Colonic mucosa (tissue), 4 donors: ENCODE measurements at regions of chr19 and their contacts with region 1.

Region 1: DNA sequence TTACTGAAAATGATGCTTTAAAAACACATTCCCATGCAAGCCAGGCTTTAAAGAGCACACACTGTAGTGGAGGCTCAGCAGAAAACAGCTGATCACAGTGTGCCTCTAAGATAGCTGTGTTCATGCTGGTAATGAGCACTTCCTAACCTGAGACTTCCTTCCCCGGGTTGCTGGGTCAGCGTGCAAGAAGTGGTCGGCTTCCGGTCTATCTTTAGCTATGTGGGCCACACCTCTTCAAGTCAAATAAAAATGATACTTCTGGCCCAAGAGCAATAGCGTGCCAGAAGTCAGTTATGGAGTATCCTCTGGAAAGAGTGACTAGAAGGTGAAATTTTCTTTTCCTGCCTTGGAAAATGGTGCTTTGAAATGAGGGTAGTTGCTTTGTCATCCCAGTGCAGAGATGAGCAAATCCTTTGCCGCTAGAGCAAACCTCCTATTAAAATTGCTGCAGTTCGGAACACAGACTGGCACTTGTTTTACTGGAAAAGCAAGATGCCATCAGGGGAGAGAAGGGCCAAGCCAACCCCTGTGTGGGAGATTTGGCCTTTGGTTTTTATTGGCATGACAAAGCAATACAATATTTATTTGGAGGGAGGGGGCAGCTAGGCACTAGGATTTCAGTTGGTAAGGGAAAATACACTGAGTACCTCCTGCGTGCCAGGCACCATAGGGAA is 64.2 kb downstream of the ARHGAP35 start:
- DNase-seq: peak; percentile 50
- H3K4me3 ChIP-seq: no peak overlapping the region
- H3K27ac ChIP-seq: peak overlapping the region; percentile 74
- H3K4me1 ChIP-seq: peaks cover 22% of the 10 kb centered on the region
- H3K27me3 ChIP-seq: no peaks in the 10 kb centered on the region
- CTCF ChIP-seq: no peak

Region 2: DNA sequence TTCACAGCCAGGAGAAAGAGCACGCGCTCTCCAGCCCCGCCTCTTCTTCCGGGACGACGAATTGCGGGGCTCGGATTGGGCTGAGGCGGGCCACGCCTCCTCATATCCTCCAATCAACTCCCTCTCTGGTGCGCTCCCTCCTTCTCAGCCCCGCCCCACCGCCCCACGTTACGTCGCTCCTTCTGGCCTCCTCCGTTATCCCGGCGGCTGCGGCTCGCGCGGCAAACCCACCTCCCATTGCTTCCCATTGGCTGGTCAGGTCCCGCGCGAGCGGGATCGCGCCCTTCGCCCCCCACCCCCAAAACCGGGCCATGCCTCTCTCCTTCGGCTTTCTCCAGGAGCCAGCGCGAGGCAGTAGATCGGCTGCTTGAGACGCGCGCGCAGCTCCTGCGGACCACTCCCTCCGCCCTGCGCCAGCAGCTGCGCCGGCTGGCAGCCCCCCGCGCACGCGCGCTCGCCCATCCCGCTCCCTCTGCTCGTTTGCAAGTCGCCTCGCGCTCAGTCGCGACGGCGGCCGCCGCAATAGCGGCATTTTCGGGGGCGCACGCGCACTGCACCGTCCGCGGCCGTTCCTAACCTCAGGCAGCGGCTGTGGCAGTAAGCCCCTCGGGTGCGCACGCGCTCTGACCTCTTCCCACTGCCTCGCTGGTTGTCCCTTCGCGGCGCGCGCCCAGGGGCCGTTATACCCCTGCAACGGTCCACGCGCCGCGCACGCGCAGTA is 64.7 kb before region 1 on chr19:
- intact Hi-C with region 1: loop called (anchors 10 kb)
- DNase-seq: peak; percentile 98
- H3K4me3 ChIP-seq: peak overlapping the region; percentile 90
- H3K27ac ChIP-seq: peak overlapping the region; percentile 96
- H3K4me1 ChIP-seq: peaks cover 12% of the 10 kb centered on the region
- H3K27me3 ChIP-seq: no peaks in the 10 kb centered on the region
- CTCF ChIP-seq: no peak